ENCODE measurements at regions of chr20 and their contacts with region 1.

Region 1: DNA sequence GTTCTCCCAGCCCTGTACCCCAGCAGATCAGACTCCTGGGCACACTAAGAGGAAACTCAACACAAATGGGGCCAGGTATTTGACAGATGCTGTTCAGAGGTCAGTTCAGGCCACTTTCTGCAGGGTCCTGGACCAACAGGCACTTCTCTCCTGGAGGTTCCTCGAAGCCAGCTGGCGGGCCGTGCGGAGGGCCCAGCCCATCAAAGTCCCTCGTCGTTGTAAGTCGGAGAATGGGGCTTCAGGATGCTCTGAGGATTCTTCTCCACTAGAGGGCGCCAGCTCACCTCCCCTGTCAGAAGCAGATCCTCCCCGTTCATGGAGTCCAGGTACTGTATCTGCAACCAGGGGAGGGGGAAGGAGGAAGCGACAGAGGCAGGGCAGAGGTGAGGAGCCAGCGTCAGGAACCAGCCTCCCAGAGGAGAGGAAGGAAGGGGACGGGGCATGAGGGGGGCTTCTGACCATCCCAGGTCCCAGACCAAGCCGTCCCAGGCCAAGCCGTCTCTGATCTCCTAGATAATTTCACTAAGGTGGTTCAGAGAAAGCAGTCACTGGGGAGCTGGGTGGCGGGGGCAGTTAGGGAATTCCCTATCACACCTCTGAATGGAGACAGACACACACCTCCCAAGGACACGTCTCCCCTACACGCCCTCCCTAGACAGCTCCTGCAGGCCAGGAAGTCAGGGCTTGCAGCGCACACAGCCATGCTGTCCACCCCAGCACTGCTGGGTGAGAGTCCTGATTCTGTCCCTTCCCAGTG is 11.7 kb upstream of the FAM83C start:
- DNase-seq: peak; percentile 92
- H3K4me3 Mint-ChIP-seq: no peak overlapping the region
- H3K27ac Mint-ChIP-seq: peak overlapping the region; percentile 94
- H3K4me1 Mint-ChIP-seq: peaks cover 63% of the 10 kb centered on the region
- H3K27me3 Mint-ChIP-seq: no peaks in the 10 kb centered on the region
- CTCF ChIP-seq: peak; percentile 92

Region 2: DNA sequence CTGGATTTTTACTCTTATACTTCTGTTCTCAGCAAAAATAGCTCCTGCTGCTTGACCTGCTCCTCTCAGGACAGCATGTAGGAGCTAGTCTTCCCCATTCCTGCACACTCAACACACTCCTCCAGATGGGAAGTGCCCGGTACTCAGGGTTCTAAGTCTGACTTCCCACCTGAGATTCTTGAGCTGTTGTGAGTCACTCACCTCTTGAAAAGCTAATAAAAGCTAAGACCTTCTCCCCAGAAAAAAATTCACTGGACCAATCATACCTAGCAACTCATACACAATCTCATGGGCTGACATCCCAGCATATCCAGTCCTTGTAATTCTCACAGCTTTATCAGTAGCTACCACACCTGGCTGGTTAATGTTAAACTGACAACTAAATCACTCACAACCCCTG is 264.8 kb before region 1 on chr20:
- CTCF ChIA-PET with region 1: no interaction called
- POLR2A ChIA-PET with region 1: no interaction called
- intact Hi-C with region 1: no loop called
- DNase-seq: no peak
- H3K4me3 Mint-ChIP-seq: no peak overlapping the region
- H3K27ac Mint-ChIP-seq: no peak overlapping the region
- H3K4me1 Mint-ChIP-seq: peaks cover 6% of the 10 kb centered on the region
- H3K27me3 Mint-ChIP-seq: no peaks in the 10 kb centered on the region
- CTCF ChIP-seq: no peak

Region 3: GRCh38 chr20:35284267-35284991 is 19.5 kb before region 1 on chr20 and contains the start of gene EIF6:
- CTCF ChIA-PET with region 1: interaction called, 55 read pairs
- POLR2A ChIA-PET with region 1: interaction called, 121 read pairs
- intact Hi-C with region 1: no loop called
- DNase-seq: peak; percentile 86
- H3K4me3 Mint-ChIP-seq: peak within 1 kb of the TSS; percentile 89
- H3K27ac Mint-ChIP-seq: peak within 1 kb of the TSS; percentile 90
- H3K4me1 Mint-ChIP-seq: peaks cover 25% of the 10 kb centered on the region
- H3K27me3 Mint-ChIP-seq: no peaks in the 10 kb centered on the region
- CTCF ChIP-seq: no peak
- total RNA-seq, gene EIF6: 322 and 354 TPM in 2 replicates

Region 4: DNA sequence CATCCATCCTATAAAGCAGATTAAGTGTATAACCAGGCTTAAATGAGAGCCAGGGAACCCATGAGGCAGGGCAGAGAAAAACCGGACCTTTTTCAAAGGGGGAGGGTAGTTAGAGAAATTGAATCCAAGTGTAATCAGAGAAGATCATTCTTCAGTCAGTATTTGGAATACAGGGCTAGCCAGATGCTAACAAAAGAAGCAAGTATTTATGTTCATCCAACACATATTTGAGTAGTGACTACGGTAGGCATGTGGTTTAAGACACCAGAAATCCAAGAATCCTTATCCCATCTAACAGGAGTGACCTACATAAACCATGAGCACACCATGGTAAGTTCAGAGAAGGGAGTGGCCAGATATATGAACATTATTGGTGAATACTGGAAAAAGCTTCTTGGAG is 35.1 kb after region 1 on chr20:
- CTCF ChIA-PET with region 1: interaction called, 151 read pairs
- POLR2A ChIA-PET with region 1: interaction called, 227 read pairs
- intact Hi-C with region 1: no loop called
- DNase-seq: peak; percentile 31
- H3K4me3 Mint-ChIP-seq: no peak overlapping the region
- H3K27ac Mint-ChIP-seq: no peak overlapping the region
- H3K4me1 Mint-ChIP-seq: peaks cover 28% of the 10 kb centered on the region
- H3K27me3 Mint-ChIP-seq: no peaks in the 10 kb centered on the region
- CTCF ChIP-seq: no peak

Region 5: DNA sequence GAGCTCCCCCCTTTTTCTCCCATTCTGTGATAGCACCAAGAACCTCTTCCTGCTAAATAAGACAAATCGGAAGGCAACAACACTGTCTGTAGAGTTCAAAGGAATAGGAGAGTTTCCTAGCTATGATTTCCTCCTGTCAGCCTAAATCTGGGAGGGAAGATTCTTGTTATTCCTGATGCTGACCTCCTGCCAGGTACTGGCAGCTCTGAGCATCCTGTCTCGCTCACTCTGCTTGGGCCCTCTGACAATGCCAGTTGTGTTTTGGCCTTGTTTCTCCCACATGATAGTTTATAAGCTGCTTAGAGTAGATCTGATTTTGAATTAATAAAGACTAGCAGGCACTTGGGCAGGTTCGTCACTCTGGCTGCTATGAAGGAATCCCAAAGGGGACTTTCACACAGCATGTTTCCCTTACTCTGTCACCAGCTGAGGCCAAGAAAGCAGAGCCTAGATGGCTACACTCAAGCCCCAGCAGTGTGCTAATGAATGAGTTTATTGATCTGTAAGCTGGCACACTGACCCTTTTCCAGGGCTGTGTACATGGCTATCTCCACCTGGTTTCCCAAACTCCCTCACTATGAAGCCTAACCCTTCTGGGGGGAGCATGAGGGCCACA is 55.5 kb after region 1 on chr20:
- CTCF ChIA-PET with region 1: interaction called, 18 read pairs
- POLR2A ChIA-PET with region 1: interaction called, 47 read pairs
- intact Hi-C with region 1: no loop called
- DNase-seq: no peak
- H3K4me3 Mint-ChIP-seq: no peak overlapping the region
- H3K27ac Mint-ChIP-seq: no peak overlapping the region
- H3K4me1 Mint-ChIP-seq: peaks cover 19% of the 10 kb centered on the region
- H3K27me3 Mint-ChIP-seq: no peaks in the 10 kb centered on the region
- CTCF ChIP-seq: no peak

Region 6: GRCh38 chr20:35410613-35411012 is 106.7 kb after region 1 on chr20:
- CTCF ChIA-PET with region 1: interaction called, 10 read pairs
- POLR2A ChIA-PET with region 1: interaction called, 63 read pairs
- intact Hi-C with region 1: no loop called
- DNase-seq: no peak
- H3K4me3 Mint-ChIP-seq: peak overlapping the region; percentile 99
- H3K27ac Mint-ChIP-seq: peak overlapping the region; percentile 99
- H3K4me1 Mint-ChIP-seq: peaks cover 7% of the 10 kb centered on the region
- H3K27me3 Mint-ChIP-seq: no peaks in the 10 kb centered on the region
- CTCF ChIP-seq: no peak

Region 7: DNA sequence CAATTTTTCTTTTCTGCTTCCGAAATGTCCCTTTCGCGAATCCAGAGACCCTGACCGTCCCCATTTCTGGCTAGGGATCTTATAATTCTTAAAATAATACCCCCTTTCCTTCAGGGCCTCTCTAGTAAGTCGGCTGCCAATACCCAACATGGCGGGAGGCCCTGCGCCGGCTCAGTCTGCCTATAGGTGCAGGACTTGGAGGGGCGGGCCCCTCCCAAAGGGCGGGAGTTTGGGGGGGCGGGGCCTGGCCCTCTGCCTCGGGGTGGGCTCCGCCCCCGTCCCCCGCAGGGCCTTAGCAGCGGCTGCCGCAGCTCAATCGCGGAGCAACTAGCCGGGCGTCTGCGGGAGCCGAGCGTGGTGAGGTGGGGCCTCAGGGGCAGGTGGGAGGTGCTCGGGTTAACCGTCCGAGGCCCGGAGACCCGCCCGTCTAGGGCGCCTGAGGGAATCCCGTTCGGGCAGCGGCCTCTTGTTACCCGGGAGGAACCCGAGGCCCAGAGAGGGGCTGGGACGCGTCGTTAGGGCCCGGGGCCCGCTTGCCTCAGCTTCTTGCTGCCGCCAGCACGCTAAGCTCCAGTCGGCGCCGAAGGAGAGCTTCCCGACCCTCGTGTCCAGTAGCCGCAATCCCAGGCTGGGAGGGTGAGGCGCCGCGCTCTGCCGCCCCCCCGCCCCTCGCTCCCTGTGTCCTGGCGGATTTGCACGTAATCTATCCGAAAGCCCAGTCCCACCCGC is 151.1 kb after region 1 on chr20 and contains the start of gene CEP250:
- CTCF ChIA-PET with region 1: interaction called, 374 read pairs
- POLR2A ChIA-PET with region 1: interaction called, 253 read pairs
- intact Hi-C with region 1: no loop called
- DNase-seq: peak; percentile 94
- H3K4me3 Mint-ChIP-seq: peak within 1 kb of the TSS; percentile 84
- H3K27ac Mint-ChIP-seq: peak within 1 kb of the TSS; percentile 99
- H3K4me1 Mint-ChIP-seq: peaks cover 24% of the 10 kb centered on the region
- H3K27me3 Mint-ChIP-seq: no peaks in the 10 kb centered on the region
- CTCF ChIP-seq: no peak
- total RNA-seq, gene CEP250: 41.0 and 44.0 TPM in 2 replicates

Measured in MCF 10A (cell line).